A673 (cell line): ENCODE measurements at regions of chr2 and their contacts with region 1.

Region 1: DNA sequence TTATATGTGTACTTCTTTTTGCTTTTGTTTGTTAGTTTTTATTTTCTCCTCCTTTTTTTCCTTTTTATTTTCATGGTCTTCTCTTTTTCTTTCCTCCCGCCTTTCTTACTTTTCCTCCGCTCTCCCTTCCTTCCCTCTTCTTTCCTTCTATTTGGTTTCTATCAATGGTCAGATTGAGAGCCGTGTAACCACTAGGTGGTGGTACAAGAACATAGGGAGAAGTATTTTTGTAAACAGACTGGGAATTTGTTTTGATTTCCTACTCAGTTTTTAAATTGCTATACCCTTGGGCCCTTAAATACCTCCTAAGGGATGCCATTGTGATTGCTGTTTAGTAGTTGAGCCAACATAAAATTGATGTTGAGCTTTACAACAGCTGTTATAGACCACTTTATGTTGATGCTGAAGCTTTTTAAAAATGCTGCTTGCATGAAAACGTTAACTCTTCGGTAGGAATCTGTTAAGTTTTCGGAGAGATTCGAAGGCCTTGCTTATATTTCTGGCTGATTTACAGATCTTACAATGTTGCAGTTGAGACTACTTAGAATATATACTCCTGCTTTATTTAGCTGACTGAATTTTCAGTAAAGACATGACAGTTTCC is 124.2 kb downstream of the UBE2E3 start:
- DNase-seq: peak; percentile 73
- H3K4me3 ChIP-seq: no peak overlapping the region
- H3K27ac ChIP-seq: no peak overlapping the region
- H3K4me1 ChIP-seq: peaks cover 8% of the 10 kb centered on the region
- H3K27me3 ChIP-seq: no peaks in the 10 kb centered on the region
- CTCF ChIP-seq: peak; percentile 79

Region 2: DNA sequence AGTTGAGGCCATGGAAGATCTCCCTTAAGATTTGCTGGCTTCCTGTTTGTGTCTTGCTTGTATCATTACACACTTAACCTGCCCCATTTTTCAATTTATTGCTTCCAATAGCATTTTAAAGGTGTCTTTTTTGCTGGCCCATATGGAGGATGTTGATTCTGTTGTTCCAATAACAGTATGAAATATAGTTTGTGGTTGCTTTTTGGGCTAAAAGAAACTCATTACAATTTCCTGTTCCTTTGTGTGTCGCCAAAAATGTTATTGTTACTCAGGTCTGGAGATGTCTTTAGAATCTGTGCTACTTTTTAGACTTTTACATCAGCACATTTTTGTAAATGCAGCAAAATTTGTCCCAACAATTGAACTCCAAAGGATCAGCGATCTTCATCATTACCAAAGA is 118.6 kb after region 1 on chr2:
- CTCF ChIA-PET with region 1: no interaction called
- POLR2A ChIA-PET with region 1: no interaction called
- intact Hi-C with region 1: no loop called
- DNase-seq: no peak
- H3K4me3 ChIP-seq: no peak overlapping the region
- H3K27ac ChIP-seq: no peak overlapping the region
- H3K4me1 ChIP-seq: no peaks in the 10 kb centered on the region
- H3K27me3 ChIP-seq: peaks cover 3% of the 10 kb centered on the region
- CTCF ChIP-seq: no peak

Region 3: GRCh38 chr2:181457121-181457740 is 352.6 kb after region 1 on chr2 and contains the start of gene ITGA4:
- CTCF ChIA-PET with region 1: no interaction called
- POLR2A ChIA-PET with region 1: no interaction called
- intact Hi-C with region 1: loop called (anchors 2 kb)
- DNase-seq: peak; percentile 82
- H3K4me3 ChIP-seq: peak within 1 kb of the TSS; percentile 56
- H3K27ac ChIP-seq: no peak within 1 kb of the TSS
- H3K4me1 ChIP-seq: no peaks in the 10 kb centered on the region
- H3K27me3 ChIP-seq: peaks cover 7% of the 10 kb centered on the region
- CTCF ChIP-seq: peak; percentile 76
- total RNA-seq, gene ITGA4: 4.6 and 7.0 TPM in 2 replicates

Region 4: GRCh38 chr2:181466661-181467576 is 362.3 kb after region 1 on chr2:
- CTCF ChIA-PET with region 1: no interaction called
- POLR2A ChIA-PET with region 1: no interaction called
- intact Hi-C with region 1: loop called (anchors 2 kb)
- DNase-seq: peak; percentile 60
- H3K4me3 ChIP-seq: no peak overlapping the region
- H3K27ac ChIP-seq: no peak overlapping the region
- H3K4me1 ChIP-seq: peaks cover 8% of the 10 kb centered on the region
- H3K27me3 ChIP-seq: no peaks in the 10 kb centered on the region
- CTCF ChIP-seq: peak; percentile 94

Region 5: GRCh38 chr2:181483876-181484275 is 379.3 kb after region 1 on chr2:
- CTCF ChIA-PET with region 1: no interaction called
- POLR2A ChIA-PET with region 1: no interaction called
- intact Hi-C with region 1: no loop called
- DNase-seq: peak; percentile 28
- H3K4me3 ChIP-seq: no peak overlapping the region
- H3K27ac ChIP-seq: no peak overlapping the region
- H3K4me1 ChIP-seq: no peaks in the 10 kb centered on the region
- H3K27me3 ChIP-seq: no peaks in the 10 kb centered on the region
- CTCF ChIP-seq: no peak

Region 6: GRCh38 chr2:181683518-181684453 is 579.2 kb after region 1 on chr2:
- CTCF ChIA-PET with region 1: no interaction called
- POLR2A ChIA-PET with region 1: no interaction called
- intact Hi-C with region 1: loop called (anchors 10 kb)
- DNase-seq: peak; percentile 63
- H3K4me3 ChIP-seq: peak overlapping the region; percentile 21
- H3K27ac ChIP-seq: no peak overlapping the region
- H3K4me1 ChIP-seq: peaks cover 11% of the 10 kb centered on the region
- H3K27me3 ChIP-seq: peaks cover 84% of the 10 kb centered on the region
- CTCF ChIP-seq: no peak

Region 7: DNA sequence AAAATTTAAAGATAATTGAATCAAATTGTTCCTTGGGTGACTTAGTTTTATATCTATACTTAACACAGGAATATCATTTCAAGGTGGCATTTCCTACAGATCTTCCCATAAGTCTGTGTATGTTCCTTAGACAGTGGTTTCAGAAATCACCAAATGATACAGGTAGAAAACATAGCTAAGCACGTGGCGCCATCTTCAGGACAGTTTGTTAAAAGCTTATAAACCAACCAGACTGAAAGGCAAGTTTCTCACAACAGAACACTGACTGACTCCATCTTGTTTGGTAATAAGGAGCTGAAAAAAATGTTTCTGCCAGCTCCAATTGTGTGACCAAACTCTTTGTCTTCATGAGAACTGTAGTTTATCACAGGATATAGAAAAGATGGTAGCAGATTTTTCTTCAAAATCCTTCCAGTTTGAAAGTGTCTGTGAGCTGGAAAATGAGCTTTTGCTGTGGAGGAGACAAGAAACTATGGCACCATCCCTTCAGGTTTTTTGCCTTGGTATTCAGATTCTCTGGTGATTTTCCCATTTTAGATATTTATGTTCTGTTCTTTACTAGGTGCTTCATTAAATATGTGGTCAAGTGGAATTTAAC is 610.5 kb after region 1 on chr2:
- CTCF ChIA-PET with region 1: interaction called, 5 read pairs
- POLR2A ChIA-PET with region 1: no interaction called
- intact Hi-C with region 1: loop called (anchors 2 kb)
- DNase-seq: peak; percentile 85
- H3K4me3 ChIP-seq: no peak overlapping the region
- H3K27ac ChIP-seq: no peak overlapping the region
- H3K4me1 ChIP-seq: no peaks in the 10 kb centered on the region
- H3K27me3 ChIP-seq: no peaks in the 10 kb centered on the region
- CTCF ChIP-seq: peak; percentile 81

Region 8: DNA sequence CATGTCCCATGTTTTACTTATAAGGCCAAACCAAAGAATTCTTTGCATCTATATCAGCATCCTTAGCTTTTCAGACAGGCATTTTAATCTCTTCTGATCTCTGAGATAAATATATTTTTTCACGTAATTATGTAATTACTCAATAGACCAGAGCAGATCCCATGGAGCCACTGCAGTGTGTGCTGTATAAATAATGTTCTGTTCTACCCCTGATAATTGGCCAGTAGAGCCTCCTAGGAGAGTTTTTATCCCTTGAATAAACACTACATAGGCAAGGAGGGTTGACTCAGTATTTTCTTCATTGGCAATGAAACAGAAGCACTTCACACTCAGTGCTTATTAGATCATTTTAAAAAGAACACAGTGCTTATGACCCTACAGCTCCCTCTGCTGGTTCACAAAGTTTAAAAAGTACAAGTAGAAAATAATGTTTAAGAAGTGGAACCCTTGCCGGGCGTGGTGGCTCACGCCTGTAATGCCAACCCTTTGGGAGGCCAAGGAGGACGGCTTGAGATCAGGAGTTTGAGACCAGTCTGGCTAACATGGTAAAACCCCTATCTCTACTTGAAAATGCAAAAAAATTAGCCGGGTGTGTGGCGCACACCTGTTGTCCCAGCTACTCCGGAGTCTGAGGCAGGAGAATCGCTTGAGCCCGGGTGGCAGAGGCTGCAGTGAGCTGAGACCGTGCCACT is 973.0 kb after region 1 on chr2:
- CTCF ChIA-PET with region 1: no interaction called
- POLR2A ChIA-PET with region 1: no interaction called
- intact Hi-C with region 1: loop called (anchors 10 kb)
- DNase-seq: peak; percentile 93
- H3K4me3 ChIP-seq: no peak overlapping the region
- H3K27ac ChIP-seq: no peak overlapping the region
- H3K4me1 ChIP-seq: peaks cover 19% of the 10 kb centered on the region
- H3K27me3 ChIP-seq: no peaks in the 10 kb centered on the region
- CTCF ChIP-seq: peak; percentile 72